ENCODE measurements at regions of chr3 and their contacts with region 1.

Region 1: DNA sequence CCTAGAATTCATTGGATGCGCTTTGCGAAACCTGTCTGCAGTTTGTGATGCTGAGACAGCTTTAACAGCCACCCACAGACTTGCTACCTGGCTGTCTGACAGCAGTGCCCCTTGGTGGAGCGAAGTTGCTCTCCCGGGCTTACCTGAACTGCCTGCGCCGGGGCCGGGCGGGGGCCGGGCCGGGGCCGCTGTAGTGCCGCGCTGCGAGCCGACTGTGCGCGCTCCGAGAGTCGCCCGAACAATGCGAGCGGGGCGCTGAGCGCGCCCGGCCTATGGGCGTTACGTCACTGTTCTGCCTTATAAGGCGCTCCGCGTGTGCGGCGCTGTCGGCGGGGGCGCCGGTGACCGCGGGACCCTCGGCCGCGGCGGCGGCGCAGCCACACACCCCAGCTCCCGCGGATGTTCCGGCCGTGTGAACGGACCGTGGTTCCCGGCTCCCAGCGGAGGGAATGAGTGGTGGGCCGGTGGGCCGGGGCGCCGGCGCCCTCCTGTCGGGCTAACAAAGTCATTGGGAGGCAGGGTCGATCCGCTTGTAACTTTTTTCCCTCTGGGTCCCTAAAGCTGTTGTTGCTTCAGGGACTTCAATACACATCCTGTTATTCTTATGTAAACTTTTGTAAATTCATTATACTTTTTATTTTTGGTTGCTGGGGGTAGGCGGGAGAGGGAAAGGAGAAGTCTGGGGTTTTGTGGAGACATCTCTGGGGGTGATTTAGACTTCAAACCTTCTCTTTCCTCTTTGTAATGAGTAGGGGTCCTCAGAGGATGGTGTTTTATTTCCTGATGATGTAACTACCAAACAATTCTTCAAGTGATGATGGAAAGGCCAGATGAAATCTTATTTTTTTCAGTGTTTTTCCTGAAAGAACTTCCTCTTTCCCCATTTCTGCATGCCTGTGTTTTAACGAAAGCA is 58.5 kb downstream of the CMSS1 start:
- DNase-seq: peak; percentile 85 to 92 (median 87)
- ATAC-seq: peak; percentile 83 to 98 (median 95)
- H3K4me3 ChIP-seq: peak overlapping the region; percentile 59 to 84 (median 76)
- H3K27ac ChIP-seq: peak overlapping the region; percentile 88 to 97 (median 96)
- H3K4me1 ChIP-seq: peaks cover 5 to 75% (median 25%) of the 10 kb centered on the region in 12 donors
- H3K27me3 ChIP-seq: no peaks in the 10 kb centered on the region
- CTCF ChIP-seq: peak in 4 of 12 donors; percentile 9 to 33 (median 26)
- POLR2A ChIP-seq: peak; percentile 81 to 98

Region 2: DNA sequence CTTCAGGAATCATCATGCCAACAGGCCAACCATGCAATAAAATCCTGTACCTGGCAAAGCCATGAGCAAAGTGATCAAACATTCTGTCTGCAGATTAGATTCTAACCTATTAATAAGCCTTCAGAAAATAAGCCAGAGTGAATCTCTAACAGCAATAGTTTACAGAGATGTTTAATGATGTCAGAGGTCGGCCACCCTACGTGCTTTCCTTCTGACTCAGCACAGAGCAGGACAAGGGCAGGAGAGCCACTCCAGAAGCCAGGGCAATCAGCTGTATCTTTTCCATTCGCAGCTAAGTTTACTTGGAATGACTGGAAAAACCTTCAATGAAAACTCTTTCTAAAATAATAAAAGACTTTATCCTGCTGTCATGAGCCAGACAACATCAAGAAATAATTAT is 224.6 kb before region 1 on chr3:
- intact Hi-C with region 1: no loop called
- DNase-seq: peak in 1 of 5 donors; percentile 14
- ATAC-seq: peak in 3 of 4 donors; percentile 66 to 75 (median 67)
- H3K4me3 ChIP-seq: no peak overlapping the region
- H3K27ac ChIP-seq: peak overlapping the region in 5 of 12 donors; percentile 3 to 32 (median 22)
- H3K4me1 ChIP-seq: peaks cover 0 to 55% (median 10%) of the 10 kb centered on the region in 12 donors
- H3K27me3 ChIP-seq: peaks cover 0 to 4% (median 0%) of the 10 kb centered on the region in 9 donors
- CTCF ChIP-seq: no peak
- POLR2A ChIP-seq: no peak

Region 3: DNA sequence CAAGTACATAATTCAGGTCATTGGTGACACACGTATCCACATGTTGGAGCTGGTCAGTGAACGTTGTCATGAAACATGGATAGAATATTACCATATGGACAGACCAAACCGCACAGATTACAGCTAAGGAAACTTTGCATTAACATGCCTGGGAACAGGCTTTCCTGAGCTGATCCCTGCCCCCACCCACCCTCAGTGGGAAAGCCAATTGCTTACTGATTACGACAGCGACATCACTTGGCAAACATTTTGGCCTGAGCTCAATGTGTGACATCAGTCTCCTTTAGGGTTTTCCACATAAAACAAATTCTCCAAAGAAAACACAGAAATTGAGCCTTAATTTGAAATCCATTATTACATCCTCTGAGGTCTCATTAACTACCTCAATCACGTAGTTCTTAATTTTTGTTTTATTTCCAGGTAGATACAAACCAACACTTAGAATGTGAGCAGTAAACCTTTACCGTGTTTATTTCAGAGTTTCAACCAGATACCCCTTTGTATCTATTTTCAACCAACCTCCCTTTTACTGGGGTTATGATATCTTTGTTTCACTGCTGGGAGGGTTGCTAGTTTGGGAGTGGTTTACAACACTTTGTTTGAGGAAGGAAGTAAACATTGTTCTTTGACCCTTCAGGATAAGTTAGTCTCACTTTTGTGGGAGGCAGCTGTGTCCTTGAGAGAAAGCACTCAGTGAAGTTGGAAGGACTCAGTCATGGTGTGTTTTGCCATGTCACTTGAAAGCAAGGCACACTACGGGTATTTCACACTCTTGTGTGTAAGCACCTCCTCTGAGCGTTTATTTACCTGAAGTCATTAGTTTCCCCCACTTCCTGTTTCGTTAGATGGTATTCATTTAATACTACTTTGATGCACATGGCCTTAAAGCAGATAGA is 44.5 kb after region 1 on chr3:
- intact Hi-C with region 1: loop called in 5 of 10 experiments (anchors 5 to 10 kb)
- DNase-seq: peak; percentile 70 to 86 (median 82)
- ATAC-seq: peak; percentile 59 to 88 (median 72)
- H3K4me3 ChIP-seq: no peak overlapping the region
- H3K27ac ChIP-seq: peak overlapping the region; percentile 54 to 88 (median 78)
- H3K4me1 ChIP-seq: peaks cover 0 to 52% (median 36%) of the 10 kb centered on the region in 12 donors
- H3K27me3 ChIP-seq: no peaks in the 10 kb centered on the region
- CTCF ChIP-seq: no peak
- POLR2A ChIP-seq: no peak

Region 4: GRCh38 chr3:99938270-99938911 is 62.2 kb after region 1 on chr3:
- intact Hi-C with region 1: loop called in 3 of 10 experiments (anchors 5 kb)
- DNase-seq: no peak
- ATAC-seq: no peak
- H3K4me3 ChIP-seq: no peak overlapping the region
- H3K27ac ChIP-seq: peak overlapping the region in 7 of 12 donors; percentile 4 to 77 (median 58)
- H3K4me1 ChIP-seq: peaks cover 4 to 52% (median 43%) of the 10 kb centered on the region in 12 donors
- H3K27me3 ChIP-seq: no peaks in the 10 kb centered on the region
- CTCF ChIP-seq: no peak
- POLR2A ChIP-seq: no peak

Region 5: DNA sequence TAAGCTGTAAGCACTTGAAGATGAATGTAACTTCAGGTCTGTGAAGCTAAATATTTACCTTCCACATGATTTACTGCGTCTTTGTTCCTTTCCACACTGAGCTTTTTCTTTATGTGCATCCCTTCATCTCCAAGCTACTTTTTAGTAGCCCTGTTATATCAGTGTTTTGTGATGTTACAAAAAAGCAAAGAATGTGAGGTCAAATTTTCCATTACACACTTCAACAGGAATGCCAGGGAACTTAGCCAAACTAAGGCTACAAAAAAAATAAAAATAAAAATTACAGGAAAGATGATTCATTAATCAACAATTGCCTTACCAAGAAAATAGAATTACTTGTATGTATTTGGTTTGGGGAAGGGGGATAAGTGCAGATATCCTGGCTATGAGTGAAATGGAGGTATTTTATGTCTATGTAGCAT is 165.2 kb after region 1 on chr3:
- intact Hi-C with region 1: loop called in 5 of 10 experiments (anchors 2 to 10 kb)
- DNase-seq: peak in 1 of 5 donors; percentile 25
- ATAC-seq: peak; percentile 17 to 59 (median 54)
- H3K4me3 ChIP-seq: peak overlapping the region in 1 of 12 donors; percentile 1
- H3K27ac ChIP-seq: peak overlapping the region; percentile 81 to 93 (median 91)
- H3K4me1 ChIP-seq: peaks cover 20 to 66% (median 41%) of the 10 kb centered on the region in 12 donors
- H3K27me3 ChIP-seq: no peaks in the 10 kb centered on the region
- CTCF ChIP-seq: no peak
- POLR2A ChIP-seq: peak in 1 of 2 donors; percentile 26

Region 6: DNA sequence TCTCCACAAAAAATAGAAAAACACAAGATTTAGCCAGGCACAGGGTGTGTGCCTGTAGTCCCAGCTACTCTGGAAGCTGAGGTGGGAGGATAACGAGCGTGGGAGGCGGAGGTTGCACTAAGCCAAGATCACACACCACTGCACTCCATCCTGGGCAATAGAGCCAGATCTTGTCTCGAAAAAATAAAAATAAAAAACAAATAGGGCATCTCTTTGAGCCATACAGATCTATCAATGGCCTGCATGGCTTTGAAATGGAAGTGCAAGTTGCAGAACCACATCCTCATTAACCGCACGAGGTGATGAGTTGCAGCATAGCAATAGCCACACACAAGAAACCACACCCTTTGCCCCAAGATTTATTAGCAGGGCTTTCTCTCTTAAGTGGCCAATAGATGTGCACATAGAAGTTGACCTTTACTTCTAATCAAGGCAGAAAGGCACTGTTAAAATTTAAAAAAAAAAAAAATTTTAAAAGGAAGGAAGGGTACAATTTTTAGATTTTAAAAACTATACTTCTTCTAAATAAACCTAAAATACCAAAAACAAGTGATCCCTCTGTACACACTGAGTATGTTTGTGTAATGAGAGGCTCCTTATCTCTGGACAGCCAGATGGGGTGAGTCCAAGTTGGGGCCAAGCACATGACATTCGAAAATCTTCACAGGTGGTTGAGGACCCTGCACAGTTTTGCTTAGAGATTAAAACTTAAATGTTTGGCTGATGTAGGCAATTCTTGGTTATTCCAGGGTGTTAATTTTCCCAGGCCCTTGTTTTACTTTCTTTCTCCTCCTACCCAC is 184.7 kb after region 1 on chr3:
- intact Hi-C with region 1: loop called in 1 of 10 experiments (anchors 5 kb)
- DNase-seq: no peak
- ATAC-seq: peak in 1 of 4 donors; percentile 36
- H3K4me3 ChIP-seq: no peak overlapping the region
- H3K27ac ChIP-seq: peak overlapping the region in 5 of 12 donors; percentile 4 to 32 (median 22)
- H3K4me1 ChIP-seq: peaks cover 0 to 33% (median 9%) of the 10 kb centered on the region in 12 donors
- H3K27me3 ChIP-seq: no peaks in the 10 kb centered on the region
- CTCF ChIP-seq: no peak
- POLR2A ChIP-seq: no peak